ENCODE measurements at regions of chr5 and their contacts with region 1.

Region 1: GRCh38 chr5:119913425-119913824 is 284.1 kb downstream of the FAM170A start:
- DNase-seq: no peak
- H3K4me3 Mint-ChIP-seq: no peak overlapping the region
- H3K27ac Mint-ChIP-seq: no peak overlapping the region
- H3K4me1 Mint-ChIP-seq: no peaks in the 10 kb centered on the region
- H3K27me3 Mint-ChIP-seq: no peaks in the 10 kb centered on the region
- CTCF ChIP-seq: no peak

Region 2: DNA sequence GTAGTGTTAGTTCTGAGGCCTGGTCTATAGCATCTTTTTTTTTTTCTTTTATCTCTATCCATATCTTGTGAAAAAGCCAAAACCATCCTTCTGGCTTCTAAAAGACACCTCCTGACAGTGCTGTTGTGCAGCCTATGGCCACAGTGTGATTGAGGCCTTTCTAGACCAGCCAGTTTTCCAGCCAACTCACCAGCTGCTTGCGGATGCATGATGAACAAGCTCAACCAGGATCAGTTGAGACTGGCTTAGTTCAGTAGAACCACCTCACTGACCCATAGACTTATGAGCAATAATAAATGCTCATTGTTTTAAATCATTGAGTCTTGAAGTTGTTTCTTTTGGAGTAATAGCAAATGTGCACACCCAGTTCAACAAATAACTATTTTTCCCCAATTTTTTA is 12.9 kb after region 1 on chr5:
- CTCF ChIA-PET with region 1: no interaction called
- POLR2A ChIA-PET with region 1: no interaction called
- intact Hi-C with region 1: loop called (anchors 1 kb)
- DNase-seq: no peak
- H3K4me3 Mint-ChIP-seq: no peak overlapping the region
- H3K27ac Mint-ChIP-seq: no peak overlapping the region
- H3K4me1 Mint-ChIP-seq: no peaks in the 10 kb centered on the region
- H3K27me3 Mint-ChIP-seq: no peaks in the 10 kb centered on the region
- CTCF ChIP-seq: no peak

Measured in MCF 10A (cell line).